Naive thymus-derived CD4-positive, alpha-beta T cell (primary cell): ENCODE measurements at regions of chr1 and their contacts with region 1.

Region 1: DNA sequence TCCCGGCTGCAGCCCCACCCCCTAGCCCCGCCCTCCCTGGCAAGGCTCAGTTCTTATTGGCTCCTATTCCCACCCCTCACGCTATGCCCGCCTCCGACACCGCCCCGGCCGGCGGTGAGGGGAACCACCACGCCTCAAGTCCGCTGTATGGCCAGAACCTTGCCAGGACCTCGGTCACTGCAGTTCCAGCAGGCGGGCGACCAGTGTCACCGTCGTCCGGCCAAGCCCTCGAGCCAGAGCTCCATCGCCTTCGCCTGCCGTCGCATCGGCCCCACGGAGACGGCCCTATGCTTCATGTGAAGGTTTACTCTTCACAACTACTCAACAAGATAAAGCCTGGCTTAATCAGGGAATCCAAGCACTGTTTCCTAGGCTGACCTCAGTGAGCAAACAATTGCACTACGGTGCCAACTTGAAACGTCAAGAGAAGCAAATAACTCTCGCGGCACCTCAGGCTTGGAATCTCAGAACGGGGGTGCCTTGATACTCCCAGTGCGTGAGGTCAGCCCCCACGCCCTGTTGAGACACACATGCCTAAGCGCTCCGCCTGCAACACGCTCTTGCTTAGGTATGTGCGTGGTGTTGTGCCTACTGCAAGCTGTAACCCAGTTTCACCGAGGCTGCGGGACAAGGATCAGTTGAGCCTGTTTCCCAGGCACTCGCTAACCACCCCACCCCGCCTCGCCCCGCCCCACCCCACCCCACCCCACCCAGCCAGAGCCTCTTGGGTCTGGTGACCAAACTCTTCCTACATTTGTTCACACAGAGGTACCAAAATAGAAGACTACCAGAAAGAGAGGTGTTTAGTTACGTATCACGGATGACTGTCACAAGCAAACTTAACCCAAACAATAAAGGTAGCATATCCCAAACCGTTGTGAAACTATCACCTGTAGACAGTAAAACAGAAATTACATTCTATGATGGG is 498 bp upstream of the DENND2C start:
- DNase-seq: peak; percentile 60 to 84 (median 76)
- ATAC-seq: peak; percentile 99
- H3K4me3 ChIP-seq: peak overlapping the region; percentile 77
- H3K4me3 Mint-ChIP-seq: peak overlapping the region; percentile 84 to 98 (median 96)
- H3K27ac ChIP-seq: peak overlapping the region; percentile 45
- H3K27ac Mint-ChIP-seq: peak overlapping the region in 7 of 9 donors; percentile 58 to 91 (median 82)
- H3K4me1 ChIP-seq: no peaks in the 10 kb centered on the region
- H3K4me1 Mint-ChIP-seq: peaks cover 0 to 16% (median 9%) of the 10 kb centered on the region in 7 donors
- H3K27me3 ChIP-seq: no peaks in the 10 kb centered on the region
- H3K27me3 Mint-ChIP-seq: peaks cover 2 to 60% (median 14%) of the 10 kb centered on the region in 5 donors

Region 2: DNA sequence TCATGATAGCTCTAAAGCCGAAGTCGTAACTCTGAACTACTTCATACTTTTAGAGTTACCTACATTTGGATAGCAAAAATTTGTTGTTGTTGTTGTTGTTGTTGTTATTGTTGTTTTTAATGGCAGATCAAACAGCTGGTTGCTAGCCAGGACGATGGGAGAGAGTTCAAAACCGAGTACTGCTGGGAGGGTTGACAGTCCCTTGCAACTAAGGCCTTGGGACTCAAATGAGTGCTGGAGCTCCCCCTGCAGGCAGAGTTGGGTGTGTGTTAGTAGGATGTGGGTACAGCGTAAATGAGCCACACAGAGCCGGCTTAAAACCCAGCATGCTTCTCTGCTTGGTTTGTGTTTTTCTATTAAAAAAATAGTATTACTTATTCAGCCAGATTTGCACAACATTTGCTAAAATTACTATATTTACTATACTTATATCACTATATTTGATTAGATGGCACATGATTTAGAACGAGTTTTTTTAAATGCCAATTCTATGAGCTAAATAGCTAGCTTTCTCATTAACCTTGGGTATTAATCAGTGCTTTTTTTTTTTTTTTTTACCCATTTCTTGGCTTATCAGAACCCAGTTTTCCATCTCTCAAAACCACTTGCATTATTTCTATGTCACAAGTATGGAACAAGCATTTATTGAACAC is 387.5 kb before region 1 on chr1:
- CTCF ChIA-PET with region 1: interaction called, 4 read pairs
- POLR2A ChIA-PET with region 1: no interaction called
- intact Hi-C with region 1: loop called in 1 of 2 experiments (anchors 5 kb)
- DNase-seq: peak; percentile 65 to 84 (median 78)
- ATAC-seq: peak; percentile 99
- H3K4me3 ChIP-seq: no peak overlapping the region
- H3K4me3 Mint-ChIP-seq: no peak overlapping the region
- H3K27ac ChIP-seq: no peak overlapping the region
- H3K27ac Mint-ChIP-seq: no peak overlapping the region
- H3K4me1 ChIP-seq: no peaks in the 10 kb centered on the region
- H3K4me1 Mint-ChIP-seq: peaks cover 0 to 9% (median 0%) of the 10 kb centered on the region in 7 donors
- H3K27me3 ChIP-seq: no peaks in the 10 kb centered on the region
- H3K27me3 Mint-ChIP-seq: peaks cover 0 to 25% (median 0%) of the 10 kb centered on the region in 5 donors

Region 3: GRCh38 chr1:114581335-114582287 is 88.7 kb before region 1 on chr1 and contains the start of gene BCAS2:
- CTCF ChIA-PET with region 1: no interaction called
- POLR2A ChIA-PET with region 1: interaction called, 4 read pairs
- intact Hi-C with region 1: loop called (anchors 1 kb)
- DNase-seq: peak; percentile 71 to 98 (median 97)
- ATAC-seq: peak; percentile 97
- H3K4me3 ChIP-seq: peak within 1 kb of the TSS; percentile 76
- H3K4me3 Mint-ChIP-seq: peak within 1 kb of the TSS; percentile 92 to 99 (median 98)
- H3K27ac ChIP-seq: peak within 1 kb of the TSS; percentile 93
- H3K27ac Mint-ChIP-seq: peak within 1 kb of the TSS; percentile 95 to 99 (median 98)
- H3K4me1 ChIP-seq: peaks cover 21 to 23% of the 10 kb centered on the region in 2 donors
- H3K4me1 Mint-ChIP-seq: peaks cover 14 to 55% (median 41%) of the 10 kb centered on the region in 7 donors
- H3K27me3 ChIP-seq: peaks cover 0 to 3% of the 10 kb centered on the region in 2 donors
- H3K27me3 Mint-ChIP-seq: peaks cover 0 to 4% (median 4%) of the 10 kb centered on the region in 5 donors
- total RNA-seq, gene BCAS2: 32.3 to 87.1 (median 46.0) TPM

Region 4: GRCh38 chr1:114745291-114745690 is 74.9 kb after region 1 on chr1:
- CTCF ChIA-PET with region 1: no interaction called
- POLR2A ChIA-PET with region 1: no interaction called
- intact Hi-C with region 1: no loop called
- DNase-seq: no peak
- ATAC-seq: peak; percentile 18
- H3K4me3 ChIP-seq: no peak overlapping the region
- H3K4me3 Mint-ChIP-seq: peak overlapping the region in 5 of 10 donors; percentile 1 to 37 (median 18)
- H3K27ac ChIP-seq: no peak overlapping the region
- H3K27ac Mint-ChIP-seq: peak overlapping the region in 2 of 9 donors; percentile 7 to 19
- H3K4me1 ChIP-seq: peaks cover 2 to 43% of the 10 kb centered on the region in 2 donors
- H3K4me1 Mint-ChIP-seq: peaks cover 51 to 95% (median 90%) of the 10 kb centered on the region in 7 donors
- H3K27me3 ChIP-seq: no peaks in the 10 kb centered on the region
- H3K27me3 Mint-ChIP-seq: no peaks in the 10 kb centered on the region

Region 5: DNA sequence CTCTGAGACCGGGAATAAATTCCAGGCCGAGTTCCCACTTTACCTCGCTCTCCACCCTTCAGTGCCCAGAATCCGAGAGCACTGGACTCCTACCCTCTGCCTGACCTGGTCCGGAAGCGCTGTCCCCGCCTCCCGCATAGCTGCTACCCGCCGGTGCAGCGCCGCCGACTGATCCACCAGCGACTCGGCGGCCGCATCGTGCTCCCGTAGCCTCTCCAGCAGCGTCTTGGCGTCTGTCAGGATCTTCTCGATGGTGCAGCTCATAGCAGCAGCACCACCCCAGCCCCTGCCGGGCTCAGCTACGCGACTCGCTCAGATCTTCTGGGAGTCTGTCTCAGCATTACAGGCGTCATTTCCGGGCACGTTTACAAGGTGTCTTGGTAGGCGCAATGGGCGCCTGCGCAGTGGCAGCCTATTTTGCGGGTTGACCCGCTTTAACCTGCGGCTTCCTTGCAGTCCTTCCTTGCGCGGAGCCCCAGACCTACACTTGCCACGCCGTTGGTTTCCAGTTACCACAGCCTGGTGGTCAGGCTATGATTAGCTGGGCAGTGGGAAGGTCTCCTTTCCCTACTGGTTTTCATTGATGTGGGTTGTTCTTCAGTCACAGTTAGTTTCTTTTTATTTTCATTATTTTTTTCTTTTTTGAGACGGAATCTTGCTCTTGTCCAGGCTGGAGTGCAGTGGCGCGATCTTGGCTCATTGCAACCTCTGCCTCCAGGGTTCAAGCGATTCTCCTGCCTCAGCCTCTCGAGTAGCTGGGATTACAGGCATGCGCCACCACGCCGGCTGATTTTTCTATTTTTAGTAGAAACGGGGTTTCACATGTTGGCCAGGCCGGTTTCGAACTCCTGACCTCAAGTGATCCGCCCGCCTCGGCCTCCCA is 110.2 kb after region 1 on chr1 and contains the start of gene SIKE1:
- CTCF ChIA-PET with region 1: no interaction called
- POLR2A ChIA-PET with region 1: interaction called, 3 read pairs
- intact Hi-C with region 1: loop called in 1 of 2 experiments (anchors 1 kb)
- DNase-seq: peak; percentile 82 to 98 (median 95)
- ATAC-seq: peak; percentile 99
- H3K4me3 ChIP-seq: peak within 1 kb of the TSS; percentile 78
- H3K4me3 Mint-ChIP-seq: peak within 1 kb of the TSS; percentile 98 to 100 (median 100)
- H3K27ac ChIP-seq: peak within 1 kb of the TSS; percentile 87
- H3K27ac Mint-ChIP-seq: peak within 1 kb of the TSS; percentile 96 to 100 (median 99)
- H3K4me1 ChIP-seq: peaks cover 0 to 8% of the 10 kb centered on the region in 2 donors
- H3K4me1 Mint-ChIP-seq: peaks cover 19 to 40% (median 30%) of the 10 kb centered on the region in 7 donors
- H3K27me3 ChIP-seq: no peaks in the 10 kb centered on the region
- H3K27me3 Mint-ChIP-seq: peaks cover 0 to 17% (median 0%) of the 10 kb centered on the region in 5 donors
- total RNA-seq, gene SIKE1: 43.4 to 69.4 (median 61.2) TPM